Psoas muscle (tissue), 8 donors: ENCODE measurements at regions of chr7 and their contacts with region 1.

Region 1: GRCh38 chr7:100965723-100966541 is 3.4 kb upstream of the MUC12 start:
- DNase-seq: peak; percentile 53 to 75
- ATAC-seq: peak; percentile 67 to 77 (median 74)
- H3K4me3 ChIP-seq: peak overlapping the region; percentile 49
- H3K27ac ChIP-seq: no peak overlapping the region
- H3K4me1 ChIP-seq: peaks cover 7% of the 10 kb centered on the region
- H3K27me3 ChIP-seq: peaks cover 0 to 80% (median 20%) of the 10 kb centered on the region in 3 donors
- CTCF ChIP-seq: peak; percentile 62

Region 2: GRCh38 chr7:100896732-100897608 is 69.0 kb before region 1 on chr7:
- intact Hi-C with region 1: loop called in 1 of 2 experiments (anchors 2 kb)
- DNase-seq: peak; percentile 75 to 77
- ATAC-seq: peak in 2 of 4 donors; percentile 23 to 24
- H3K4me3 ChIP-seq: peak overlapping the region; percentile 79
- H3K27ac ChIP-seq: peak overlapping the region; percentile 85
- H3K4me1 ChIP-seq: peaks cover 16% of the 10 kb centered on the region
- H3K27me3 ChIP-seq: peaks cover 0 to 6% (median 0%) of the 10 kb centered on the region in 3 donors
- CTCF ChIP-seq: peak; percentile 73